ENCODE measurements at regions of chrX and their contacts with region 1.

Region 1: DNA sequence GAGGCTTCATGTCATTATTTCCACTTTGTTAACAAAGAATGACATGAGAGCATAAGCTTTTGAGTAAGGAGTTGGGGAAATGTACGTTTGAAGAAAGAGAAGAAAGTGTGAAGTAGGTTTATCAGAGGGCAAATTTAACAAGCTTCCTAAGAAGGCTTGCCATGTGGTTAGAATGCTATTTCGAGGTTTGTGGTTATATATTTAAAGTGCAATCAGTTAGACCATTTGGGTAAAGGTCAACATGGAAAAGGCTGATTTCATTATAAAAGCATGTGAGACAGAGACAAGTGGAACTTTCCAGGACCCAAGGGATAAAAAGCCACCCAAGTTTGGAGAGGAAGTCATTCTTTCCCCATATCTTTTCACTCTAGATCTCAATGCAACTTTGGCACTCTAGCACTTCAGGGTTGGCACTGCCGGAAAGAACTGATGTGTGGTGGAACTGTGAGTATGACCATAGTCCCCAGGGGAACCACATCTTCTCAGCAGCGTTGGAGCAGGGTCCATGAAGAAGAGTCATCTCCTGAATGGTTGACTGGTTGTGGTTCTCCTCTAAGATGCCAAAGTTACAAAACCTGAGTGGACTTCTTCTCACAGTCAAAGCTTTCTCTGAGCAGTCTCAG is 529.9 kb downstream of the MID1IP1 start:
- DNase-seq: peak; percentile 3
- H3K4me3 Mint-ChIP-seq: peak overlapping the region; percentile 42
- H3K27ac Mint-ChIP-seq: peak overlapping the region; percentile 76
- H3K4me1 Mint-ChIP-seq: peaks cover 73% of the 10 kb centered on the region
- H3K27me3 Mint-ChIP-seq: peaks cover 2% of the 10 kb centered on the region

Region 2: GRCh38 chrX:38841750-38842149 is 489.4 kb before region 1 on chrX:
- intact Hi-C with region 1: no loop called
- DNase-seq: no peak
- H3K4me3 Mint-ChIP-seq: no peak overlapping the region
- H3K27ac Mint-ChIP-seq: no peak overlapping the region
- H3K4me1 Mint-ChIP-seq: no peaks in the 10 kb centered on the region
- H3K27me3 Mint-ChIP-seq: peaks cover 3% of the 10 kb centered on the region

Region 3: DNA sequence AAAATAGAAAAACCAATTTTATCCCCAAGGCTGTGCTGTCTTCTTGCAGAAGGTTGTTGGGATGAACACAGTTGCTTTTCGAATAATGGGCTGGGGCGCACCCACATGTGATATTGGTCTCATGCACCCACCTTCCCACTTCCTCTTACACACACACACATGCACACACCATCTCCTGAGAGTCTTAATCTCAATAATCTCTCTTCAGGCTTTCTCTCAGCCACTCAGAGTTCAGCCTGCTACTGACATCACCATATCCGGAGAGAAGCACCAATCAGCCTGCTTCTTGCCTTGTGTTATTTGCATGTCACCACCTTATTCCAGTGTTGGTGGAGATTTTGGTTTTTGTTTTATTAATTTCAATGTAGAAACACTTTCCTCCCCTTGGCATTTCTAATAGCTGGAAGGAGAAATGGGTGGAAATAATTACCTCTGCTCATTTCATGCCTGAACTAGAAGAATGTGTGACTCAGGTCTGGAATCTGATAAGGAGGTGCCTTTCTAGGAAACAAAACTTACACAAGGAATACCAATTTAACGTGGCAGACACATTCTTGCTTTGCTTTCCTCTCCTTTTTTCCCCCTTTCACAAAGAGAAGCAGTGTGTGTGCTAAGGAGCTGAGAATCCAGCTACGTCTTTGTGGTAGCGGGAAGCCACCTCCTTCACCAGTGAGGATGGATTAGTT is 129.7 kb before region 1 on chrX:
- intact Hi-C with region 1: loop called (anchors 2 kb)
- DNase-seq: no peak
- H3K4me3 Mint-ChIP-seq: no peak overlapping the region
- H3K27ac Mint-ChIP-seq: peak overlapping the region; percentile 79
- H3K4me1 Mint-ChIP-seq: peaks cover 82% of the 10 kb centered on the region
- H3K27me3 Mint-ChIP-seq: no peaks in the 10 kb centered on the region

Region 4: DNA sequence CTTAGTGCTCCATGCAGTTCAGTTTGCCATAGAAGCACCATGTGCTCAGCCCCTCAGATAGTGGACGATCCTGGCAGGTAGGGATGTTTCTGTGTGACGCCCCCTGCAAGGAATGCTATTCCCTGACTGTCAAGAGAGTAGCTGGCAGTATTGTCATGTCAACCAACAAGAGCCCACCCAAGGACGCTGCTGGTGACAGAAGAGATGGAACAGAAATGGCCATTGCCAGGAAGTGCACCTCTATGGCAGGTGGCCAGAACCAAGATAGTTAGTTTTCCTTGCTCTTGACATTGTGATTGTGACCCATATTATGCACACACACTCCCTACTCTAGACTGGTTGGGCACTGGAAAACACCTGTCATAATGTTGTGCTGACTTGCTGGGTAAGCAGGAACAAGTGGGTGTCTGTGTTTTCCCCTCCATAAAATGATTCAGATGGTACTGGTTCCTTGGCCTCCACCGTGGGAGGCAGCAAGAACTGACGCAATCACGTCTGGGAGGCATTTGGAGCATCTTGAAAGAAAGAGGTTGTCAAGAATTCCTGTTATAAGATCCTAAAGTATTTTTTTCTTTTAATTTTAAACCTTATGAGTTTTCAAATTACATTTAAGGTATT is 22.1 kb before region 1 on chrX:
- intact Hi-C with region 1: loop called (anchors 1 kb)
- DNase-seq: peak; percentile 3
- H3K4me3 Mint-ChIP-seq: peak overlapping the region; percentile 58
- H3K27ac Mint-ChIP-seq: peak overlapping the region; percentile 100
- H3K4me1 Mint-ChIP-seq: peaks cover 67% of the 10 kb centered on the region
- H3K27me3 Mint-ChIP-seq: no peaks in the 10 kb centered on the region

Region 5: DNA sequence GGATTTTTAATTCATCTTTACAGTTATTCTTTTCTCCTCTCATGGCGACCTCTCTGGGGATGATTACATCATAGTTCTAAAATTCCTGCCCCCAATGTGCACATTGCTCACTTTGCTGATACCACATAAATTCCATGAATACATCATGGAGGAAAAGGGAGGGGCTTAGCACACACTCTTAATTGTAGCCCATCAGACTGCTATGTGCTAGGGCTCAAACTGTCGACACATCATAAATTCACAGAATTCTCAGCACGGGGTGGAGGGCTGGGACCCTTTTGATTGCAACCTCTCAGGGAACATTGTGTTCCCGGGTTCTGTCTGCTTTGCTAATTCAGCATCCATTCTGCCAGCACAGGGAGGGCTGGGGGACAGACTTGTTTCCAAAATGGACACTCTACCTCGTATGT is 173.7 kb after region 1 on chrX:
- intact Hi-C with region 1: loop called (anchors 1 kb)
- DNase-seq: no peak
- H3K4me3 Mint-ChIP-seq: no peak overlapping the region
- H3K27ac Mint-ChIP-seq: no peak overlapping the region
- H3K4me1 Mint-ChIP-seq: peaks cover 26% of the 10 kb centered on the region
- H3K27me3 Mint-ChIP-seq: peaks cover 6% of the 10 kb centered on the region

Measured in activated T-helper 1 cell treated with anti-CD3 and anti-CD28 coated beads, Interleukin-12 subunit alpha, Interleukin-12 subunit beta, Interleukin-2, Interleukin-4 antibody, amounts not matched to agents 30 ng/mL and 10 ng/mL and 1 ng/mL, durations not matched to agents 14 hours and 24 hours and 36 hours (primary cell).